Endothelial cell of umbilical vein (primary cell): ENCODE measurements at regions of chr7 and their contacts with region 1.

Region 1: GRCh38 chr7:76020031-76020714 is 25.8 kb upstream of the TMEM120A start:
- DNase-seq: peak; percentile 71
- H3K4me3 ChIP-seq: no peak overlapping the region
- H3K27ac ChIP-seq: no peak overlapping the region
- H3K4me1 ChIP-seq: peaks cover 2% of the 10 kb centered on the region
- H3K27me3 ChIP-seq: no peaks in the 10 kb centered on the region
- CTCF ChIP-seq: peak; percentile 89 to 94
- POLR2A ChIP-seq: no peak

Region 2: GRCh38 chr7:75762314-75762917 is 257.8 kb before region 1 on chr7:
- CTCF ChIA-PET with region 1: interaction called, 25 read pairs
- POLR2A ChIA-PET with region 1: no interaction called
- dilution Hi-C with region 1: no loop called
- intact Hi-C with region 1: loop called (anchors 1 kb)
- DNase-seq: peak; percentile 58
- H3K4me3 ChIP-seq: no peak overlapping the region
- H3K27ac ChIP-seq: no peak overlapping the region
- H3K4me1 ChIP-seq: no peaks in the 10 kb centered on the region
- H3K27me3 ChIP-seq: no peaks in the 10 kb centered on the region
- CTCF ChIP-seq: peak; percentile 58 to 60
- POLR2A ChIP-seq: no peak

Region 3: DNA sequence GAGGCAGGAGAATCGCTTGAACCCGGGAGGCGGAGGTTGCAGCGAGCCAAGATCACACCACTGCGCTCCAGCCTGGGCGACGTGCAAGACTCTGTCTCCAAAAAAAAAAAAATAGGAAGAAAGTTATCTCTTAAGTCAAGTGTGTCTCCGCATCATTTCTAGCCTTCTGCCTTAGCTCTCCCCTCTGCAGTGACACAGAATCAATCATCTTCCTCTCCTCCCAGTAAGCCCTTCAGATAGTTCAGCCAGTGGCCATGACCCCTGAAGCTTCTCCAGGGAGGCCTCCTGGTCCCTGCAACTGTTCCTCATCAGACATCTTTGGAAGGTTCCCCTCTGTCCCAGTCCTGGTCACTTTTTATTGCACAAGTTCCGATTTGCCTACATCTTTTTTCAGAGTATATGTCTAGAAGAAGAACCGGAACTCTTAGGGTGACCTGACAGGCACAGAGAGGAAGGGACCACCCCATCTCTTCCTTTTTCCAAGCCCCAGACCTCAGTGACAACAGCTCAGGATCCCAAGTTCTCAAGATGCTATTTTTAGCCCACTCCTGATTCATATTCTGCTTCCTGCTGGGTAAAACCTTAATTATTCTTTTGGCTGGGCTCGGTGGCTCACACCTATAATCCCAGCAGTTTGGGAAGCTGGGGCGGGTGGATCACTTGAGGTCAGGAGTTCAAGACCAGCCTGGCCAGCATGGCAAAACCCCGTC is 147.9 kb before region 1 on chr7:
- CTCF ChIA-PET with region 1: interaction called, 267 read pairs
- POLR2A ChIA-PET with region 1: no interaction called
- dilution Hi-C with region 1: no loop called
- intact Hi-C with region 1: no loop called
- DNase-seq: peak; percentile 10
- H3K4me3 ChIP-seq: no peak overlapping the region
- H3K27ac ChIP-seq: no peak overlapping the region
- H3K4me1 ChIP-seq: peaks cover 6% of the 10 kb centered on the region
- H3K27me3 ChIP-seq: no peaks in the 10 kb centered on the region
- CTCF ChIP-seq: no peak
- POLR2A ChIP-seq: no peak

Region 4: GRCh38 chr7:75914730-75915585 is 105.2 kb before region 1 on chr7 and contains the start of gene POR:
- CTCF ChIA-PET with region 1: interaction called, 26 read pairs
- POLR2A ChIA-PET with region 1: no interaction called
- dilution Hi-C with region 1: no loop called
- intact Hi-C with region 1: no loop called
- DNase-seq: peak; percentile 94
- H3K4me3 ChIP-seq: peak within 1 kb of the TSS; percentile 69 to 85 (median 82)
- H3K27ac ChIP-seq: peak within 1 kb of the TSS; percentile 28
- H3K4me1 ChIP-seq: peaks cover 8% of the 10 kb centered on the region
- H3K27me3 ChIP-seq: no peaks in the 10 kb centered on the region
- CTCF ChIP-seq: no peak
- POLR2A ChIP-seq: peak; percentile 99
- total RNA-seq, gene POR: 71.9 and 73.6 TPM in 2 replicates

Region 5: GRCh38 chr7:75971961-75972763 is 48.0 kb before region 1 on chr7:
- CTCF ChIA-PET with region 1: interaction called, 11 read pairs
- POLR2A ChIA-PET with region 1: no interaction called
- dilution Hi-C with region 1: no loop called
- intact Hi-C with region 1: no loop called
- DNase-seq: no peak
- H3K4me3 ChIP-seq: no peak overlapping the region
- H3K27ac ChIP-seq: no peak overlapping the region
- H3K4me1 ChIP-seq: no peaks in the 10 kb centered on the region
- H3K27me3 ChIP-seq: no peaks in the 10 kb centered on the region
- CTCF ChIP-seq: no peak
- POLR2A ChIP-seq: no peak

Region 6: DNA sequence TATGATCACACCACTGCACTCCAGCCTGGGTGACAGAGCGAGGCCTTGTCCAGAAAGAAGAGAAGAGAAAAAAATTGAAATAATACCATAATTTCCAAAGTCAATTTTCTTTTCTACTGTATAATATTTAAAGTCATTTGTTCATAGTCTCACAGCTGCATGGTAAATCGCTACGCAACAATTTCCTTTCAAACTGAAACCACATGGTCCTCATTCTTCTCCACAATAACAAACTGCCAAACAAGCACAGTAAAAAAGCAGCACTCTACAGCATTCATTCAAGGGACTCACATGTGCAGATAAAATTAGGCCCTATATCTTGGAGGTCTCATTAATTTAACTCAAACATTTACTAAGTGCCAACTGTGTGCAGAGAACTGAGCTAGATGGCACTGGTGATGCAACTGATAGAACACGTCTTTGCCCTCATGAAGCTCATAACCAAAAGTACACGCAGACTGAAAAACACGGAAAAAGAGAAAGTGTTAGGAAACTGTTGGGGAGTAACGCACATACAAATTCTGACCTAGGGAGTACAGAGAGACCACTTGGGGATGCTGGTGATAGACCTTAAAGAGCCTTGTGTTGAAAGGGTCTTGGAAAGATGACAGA is 113.1 kb after region 1 on chr7:
- CTCF ChIA-PET with region 1: interaction called, 19 read pairs
- POLR2A ChIA-PET with region 1: no interaction called
- dilution Hi-C with region 1: no loop called
- intact Hi-C with region 1: no loop called
- DNase-seq: no peak
- H3K4me3 ChIP-seq: no peak overlapping the region
- H3K27ac ChIP-seq: no peak overlapping the region
- H3K4me1 ChIP-seq: no peaks in the 10 kb centered on the region
- H3K27me3 ChIP-seq: peaks cover 4 to 8% of the 10 kb centered on the region in 2 experiments
- CTCF ChIP-seq: no peak
- POLR2A ChIP-seq: no peak